Panc1 (cell line): ENCODE measurements at regions of chr4 and their contacts with region 1.

Region 1: DNA sequence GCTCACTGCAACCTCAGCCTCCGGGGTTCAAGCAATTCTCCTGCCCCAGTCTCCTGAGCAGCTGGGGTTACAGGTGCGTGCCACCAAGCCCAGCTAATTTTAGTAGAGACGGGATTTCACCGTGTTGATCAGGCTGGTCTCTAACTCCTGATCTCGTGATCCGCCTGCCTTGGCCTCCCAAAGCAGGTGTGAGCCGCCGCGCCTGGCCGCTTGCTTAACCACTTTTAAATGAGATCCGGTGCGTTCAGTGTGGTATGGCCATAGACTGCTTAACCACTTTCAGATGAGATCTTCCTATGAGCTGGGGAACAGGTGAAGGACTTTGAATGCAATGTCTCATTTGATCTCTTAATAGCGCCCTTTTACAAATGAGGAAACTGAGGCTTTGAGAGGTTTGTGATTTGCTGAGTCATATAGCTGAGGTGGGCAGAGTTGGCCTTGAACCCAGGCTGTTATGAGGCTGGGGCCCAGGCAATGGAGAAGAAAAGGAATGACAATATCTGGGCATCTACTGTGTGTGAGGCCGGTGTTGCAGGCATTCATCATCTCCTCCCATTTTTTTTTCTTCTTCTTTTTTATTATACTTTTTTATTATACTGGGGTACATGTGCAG is 41.9 kb upstream of the NSG1 start:
- DNase-seq: no peak
- ATAC-seq: no peak
- H3K4me3 ChIP-seq: no peak overlapping the region
- H3K27ac ChIP-seq: no peak overlapping the region
- H3K4me1 ChIP-seq: no peaks in the 10 kb centered on the region
- H3K27me3 ChIP-seq: no peaks in the 10 kb centered on the region; the same call in 1 of the 2 replicates
- CTCF ChIP-seq: no peak

Region 2: GRCh38 chr4:4376074-4376473 is 31.1 kb after region 1 on chr4:
- CTCF ChIA-PET with region 1: interaction called, 20 read pairs
- POLR2A ChIA-PET with region 1: no interaction called
- in situ Hi-C with region 1: no loop called
- intact Hi-C with region 1: no loop called
- DNase-seq: no peak
- ATAC-seq: no peak
- H3K4me3 ChIP-seq: no peak overlapping the region
- H3K27ac ChIP-seq: no peak overlapping the region
- H3K4me1 ChIP-seq: no peaks in the 10 kb centered on the region
- H3K27me3 ChIP-seq: peaks cover 5% of the 10 kb centered on the region; the same call in 1 of the 2 replicates
- CTCF ChIP-seq: no peak